ENCODE measurements at regions of chr3 and their contacts with region 1.

Region 1: DNA sequence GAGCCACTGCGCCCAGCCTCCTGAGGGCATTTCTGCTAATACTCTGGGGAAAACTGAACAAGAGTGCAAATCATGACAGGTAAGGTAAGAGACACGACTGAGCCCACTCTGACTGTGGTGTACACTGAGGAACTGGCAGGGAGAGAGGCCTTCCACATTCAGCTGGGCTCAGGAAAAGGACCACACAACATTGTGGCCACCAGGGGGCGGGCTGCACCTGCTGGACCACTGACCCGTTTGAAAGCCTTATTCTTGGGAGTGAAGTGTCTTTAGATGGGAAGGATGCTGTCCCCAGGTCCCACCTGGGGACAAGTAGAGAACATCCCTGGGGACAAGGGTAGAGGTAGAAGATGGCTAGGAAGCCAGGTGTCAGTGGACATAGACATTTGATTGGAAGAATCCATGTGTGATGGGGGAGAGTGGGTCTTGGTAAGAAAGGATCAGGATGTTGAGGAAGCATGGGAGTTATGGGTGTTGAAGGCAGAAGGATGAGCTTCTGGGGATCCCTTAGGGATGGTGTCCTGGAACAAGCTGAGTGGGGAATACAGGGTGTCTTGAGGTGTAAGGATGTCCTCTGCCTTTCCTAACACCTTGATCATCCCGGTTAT is 6.2 kb upstream of the CTDSPL start:
- DNase-seq: peak; percentile 75
- CTCF ChIP-seq: peak; percentile 85

Region 2: DNA sequence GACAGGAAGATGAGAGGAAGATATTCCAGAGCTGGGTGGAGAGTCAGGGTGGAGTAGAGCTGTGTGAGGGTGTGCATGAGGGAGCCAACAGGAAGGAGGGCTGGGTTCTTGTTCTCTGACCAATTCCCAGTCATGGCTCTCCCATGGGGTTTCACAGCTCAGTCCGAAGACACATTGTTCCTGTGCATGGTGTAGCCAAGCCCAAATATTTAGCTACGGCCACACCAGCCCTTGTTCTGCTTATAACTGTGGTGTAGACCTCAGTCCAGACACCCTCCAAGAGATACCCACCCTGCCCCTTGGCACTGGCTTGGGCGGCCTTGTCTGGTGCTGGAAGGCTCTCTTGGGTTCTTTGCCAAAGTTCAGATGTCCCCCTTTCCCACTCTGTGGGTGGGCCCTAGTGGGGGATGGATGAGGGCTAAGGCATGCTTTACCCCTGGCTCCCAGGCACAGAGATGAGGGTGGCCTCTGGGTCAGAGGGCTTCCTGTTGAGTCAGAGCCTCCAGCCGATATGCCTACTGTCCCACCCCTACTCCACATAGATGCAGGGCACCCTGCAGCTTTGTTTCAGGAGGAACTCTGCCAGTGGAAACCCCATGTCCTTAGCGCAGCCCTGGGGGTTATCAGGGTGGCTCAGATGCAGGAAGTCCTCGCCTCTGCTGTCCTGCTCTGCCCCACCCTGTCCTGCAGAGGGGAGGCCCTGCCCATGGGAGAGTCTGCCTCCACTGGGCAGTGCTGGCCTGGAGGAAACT is 265.0 kb before region 1 on chr3:
- CTCF ChIA-PET with region 1: no interaction called
- POLR2A ChIA-PET with region 1: no interaction called
- DNase-seq: no peak
- CTCF ChIP-seq: no peak

Region 3: DNA sequence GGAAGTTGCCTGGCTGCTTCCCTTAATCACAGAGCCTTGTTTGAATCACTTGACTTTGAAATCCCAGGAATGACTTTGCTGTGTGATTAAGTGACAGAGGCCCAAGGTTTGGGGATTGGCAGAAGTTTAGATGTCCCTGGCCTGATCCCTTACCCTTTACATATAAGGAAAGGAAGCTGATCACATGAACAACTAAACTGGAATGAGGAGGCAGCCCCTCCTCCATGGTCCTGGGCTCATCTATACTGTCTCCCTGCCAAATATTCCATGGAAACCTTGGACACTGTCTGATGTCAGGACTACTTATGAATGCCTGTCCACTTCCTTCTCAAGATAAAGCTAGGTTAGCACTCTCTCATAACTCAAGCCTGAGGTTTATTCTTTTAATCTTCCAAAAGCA is 175.1 kb before region 1 on chr3:
- CTCF ChIA-PET with region 1: no interaction called
- POLR2A ChIA-PET with region 1: no interaction called
- DNase-seq: no peak
- CTCF ChIP-seq: no peak

Region 4: GRCh38 chr3:37872413-37873160 is 17.1 kb after region 1 on chr3:
- CTCF ChIA-PET with region 1: interaction called, 46 read pairs
- POLR2A ChIA-PET with region 1: no interaction called
- DNase-seq: no peak
- CTCF ChIP-seq: no peak

Region 5: GRCh38 chr3:37887062-37887461 is 31.6 kb after region 1 on chr3:
- CTCF ChIA-PET with region 1: interaction called, 13 read pairs
- POLR2A ChIA-PET with region 1: no interaction called
- DNase-seq: no peak
- CTCF ChIP-seq: no peak

Region 6: GRCh38 chr3:37956723-37957528 is 101.5 kb after region 1 on chr3:
- CTCF ChIA-PET with region 1: interaction called, 331 read pairs
- POLR2A ChIA-PET with region 1: no interaction called
- DNase-seq: no peak
- CTCF ChIP-seq: no peak

Region 7: DNA sequence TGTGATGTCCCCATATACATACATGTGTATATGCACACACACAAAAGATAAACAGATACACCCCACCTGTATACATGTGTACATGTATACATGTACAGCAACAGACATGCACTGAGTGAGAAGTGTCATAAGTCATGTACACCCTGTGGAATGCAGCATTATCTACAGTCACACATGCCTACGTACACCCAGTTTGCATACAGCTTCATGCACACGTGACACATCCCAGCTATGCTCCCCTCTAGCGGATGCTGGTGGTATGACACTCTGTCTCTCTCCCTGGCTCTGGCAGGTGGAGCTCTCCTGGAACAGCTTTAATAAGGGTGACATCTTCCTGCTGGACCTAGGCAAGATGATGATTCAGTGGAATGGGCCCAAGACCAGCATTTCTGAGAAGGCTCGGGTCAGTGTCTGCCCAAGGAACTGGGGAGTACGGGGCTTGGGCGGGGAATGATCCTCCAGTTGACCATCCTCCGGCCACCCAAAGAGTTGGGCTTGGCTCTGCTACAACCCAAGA is 141.4 kb after region 1 on chr3:
- CTCF ChIA-PET with region 1: interaction called, 19 read pairs
- POLR2A ChIA-PET with region 1: no interaction called
- DNase-seq: peak; percentile 78
- CTCF ChIP-seq: peak; percentile 90

Region 8: DNA sequence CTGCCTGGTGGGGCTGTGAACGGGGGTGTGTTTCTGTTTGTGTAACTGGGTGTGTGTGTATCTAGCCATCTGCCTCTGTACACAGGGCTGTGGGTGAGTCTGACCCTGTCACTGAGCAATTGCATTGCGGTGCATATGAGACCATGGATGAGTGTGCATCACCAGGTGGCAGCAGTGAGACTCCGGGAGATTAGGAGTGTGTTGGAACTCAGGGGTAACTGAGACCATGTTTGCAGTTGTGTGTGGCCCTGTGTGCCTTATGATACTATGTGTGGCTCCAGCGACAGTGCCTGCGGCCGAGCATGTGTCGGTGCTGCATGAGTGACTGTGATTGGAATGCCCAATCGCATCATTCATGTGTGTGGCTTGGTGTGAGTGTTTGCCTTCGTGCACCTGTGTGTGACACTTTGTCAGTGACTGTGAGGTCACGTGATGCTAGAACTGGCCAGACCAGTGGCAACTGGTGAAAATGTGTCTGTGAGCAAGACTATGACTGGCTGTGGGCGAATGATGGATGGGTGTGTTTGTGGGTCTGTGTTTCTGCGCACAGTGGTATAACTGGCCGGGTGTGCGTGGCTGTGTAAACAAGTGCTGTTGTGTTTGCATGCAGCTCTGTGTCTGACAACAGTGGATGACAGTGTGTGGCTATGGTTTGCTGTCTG is 149.1 kb after region 1 on chr3:
- CTCF ChIA-PET with region 1: interaction called, 13 read pairs
- POLR2A ChIA-PET with region 1: no interaction called
- DNase-seq: no peak
- CTCF ChIP-seq: peak; percentile 75

Region 9: GRCh38 chr3:38017442-38018295 is 162.2 kb after region 1 on chr3:
- CTCF ChIA-PET with region 1: no interaction called
- POLR2A ChIA-PET with region 1: no interaction called
- DNase-seq: no peak
- CTCF ChIP-seq: no peak

Measured in GM10248 (cell line).